GM13977 (cell line): ENCODE measurements at regions of chr5 and their contacts with region 1.

Region 1: GRCh38 chr5:113043491-113043931 is 66.9 kb downstream of the DCP2 start:
- DNase-seq: no peak
- CTCF ChIP-seq: peak; percentile 28

Region 2: DNA sequence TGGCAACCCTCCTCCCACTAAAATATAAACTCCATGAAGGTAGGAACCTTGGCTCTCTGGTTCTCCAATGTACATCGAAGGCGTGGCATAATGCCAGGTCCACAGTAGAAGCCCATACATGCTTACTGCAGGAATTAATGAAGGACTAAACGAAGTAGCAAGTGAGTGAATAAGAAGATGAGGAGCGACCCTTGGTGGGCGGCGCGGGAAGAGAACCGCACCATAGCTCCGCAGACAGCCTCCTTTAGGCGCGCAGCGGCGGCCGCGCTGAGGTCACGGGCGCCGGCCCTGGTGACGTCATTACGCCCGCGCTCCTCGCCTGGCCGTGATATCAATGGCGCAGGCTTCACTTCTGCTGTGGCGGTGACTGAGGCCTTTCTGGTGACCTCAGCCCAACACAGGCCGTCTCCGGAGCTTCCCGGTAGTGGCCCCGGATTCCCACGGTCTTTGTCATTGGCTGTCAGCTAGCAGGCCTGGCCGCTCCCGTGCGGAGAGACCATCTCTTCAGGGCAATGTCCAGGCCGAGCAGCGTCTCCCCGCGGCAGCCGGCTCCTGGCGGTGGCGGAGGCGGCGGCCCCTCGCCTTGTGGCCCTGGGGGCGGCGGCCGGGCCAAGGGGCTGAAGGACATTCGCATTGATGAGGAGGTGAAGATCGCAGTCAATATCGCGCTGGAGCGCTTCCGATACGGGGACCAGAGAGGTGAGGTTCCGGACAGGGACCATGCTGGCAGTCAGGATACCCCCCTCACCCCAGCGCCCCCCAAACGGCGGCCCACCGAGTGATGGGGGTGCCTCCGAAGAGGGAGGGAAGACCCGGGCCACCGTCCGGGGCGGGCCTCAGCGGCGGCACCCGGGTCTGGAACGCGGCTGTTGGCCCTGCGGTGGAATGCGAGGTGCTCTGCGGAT is 470.1 kb after region 1 on chr5 and contains the start of gene YTHDC2:
- in situ Hi-C with region 1: loop called (anchors 25 kb)
- DNase-seq: peak; percentile 81
- CTCF ChIP-seq: peak; percentile 37